ENCODE measurements at regions of chr14 and their contacts with region 1.

Region 1: DNA sequence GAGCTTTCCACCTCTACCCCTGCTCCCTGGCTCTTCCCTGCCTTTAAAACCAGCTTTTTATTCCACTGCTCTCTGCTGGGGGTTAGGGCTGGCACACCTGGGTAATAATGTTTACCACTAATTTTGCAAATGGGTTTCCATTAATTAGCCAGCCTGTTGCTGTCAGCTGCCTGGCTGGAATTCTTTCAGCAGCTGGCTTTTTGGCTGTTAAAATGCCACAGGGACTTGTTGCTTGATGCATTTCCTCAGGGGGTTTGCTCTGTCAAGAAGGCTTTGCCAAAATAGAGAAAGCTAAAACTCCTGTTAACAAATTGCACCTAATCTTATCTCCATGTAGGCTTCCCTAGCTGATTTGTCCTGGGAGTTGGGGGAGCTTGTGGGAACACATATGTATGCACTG is 51.8 kb upstream of the PSMC1 start:
- DNase-seq: no peak
- ATAC-seq: no peak
- H3K4me3 ChIP-seq: no peak overlapping the region
- H3K27ac ChIP-seq: no peak overlapping the region
- H3K4me1 ChIP-seq: no peaks in the 10 kb centered on the region
- H3K27me3 ChIP-seq: no peaks in the 10 kb centered on the region
- CTCF ChIP-seq: no peak
- POLR2A ChIP-seq: no peak

Region 2: DNA sequence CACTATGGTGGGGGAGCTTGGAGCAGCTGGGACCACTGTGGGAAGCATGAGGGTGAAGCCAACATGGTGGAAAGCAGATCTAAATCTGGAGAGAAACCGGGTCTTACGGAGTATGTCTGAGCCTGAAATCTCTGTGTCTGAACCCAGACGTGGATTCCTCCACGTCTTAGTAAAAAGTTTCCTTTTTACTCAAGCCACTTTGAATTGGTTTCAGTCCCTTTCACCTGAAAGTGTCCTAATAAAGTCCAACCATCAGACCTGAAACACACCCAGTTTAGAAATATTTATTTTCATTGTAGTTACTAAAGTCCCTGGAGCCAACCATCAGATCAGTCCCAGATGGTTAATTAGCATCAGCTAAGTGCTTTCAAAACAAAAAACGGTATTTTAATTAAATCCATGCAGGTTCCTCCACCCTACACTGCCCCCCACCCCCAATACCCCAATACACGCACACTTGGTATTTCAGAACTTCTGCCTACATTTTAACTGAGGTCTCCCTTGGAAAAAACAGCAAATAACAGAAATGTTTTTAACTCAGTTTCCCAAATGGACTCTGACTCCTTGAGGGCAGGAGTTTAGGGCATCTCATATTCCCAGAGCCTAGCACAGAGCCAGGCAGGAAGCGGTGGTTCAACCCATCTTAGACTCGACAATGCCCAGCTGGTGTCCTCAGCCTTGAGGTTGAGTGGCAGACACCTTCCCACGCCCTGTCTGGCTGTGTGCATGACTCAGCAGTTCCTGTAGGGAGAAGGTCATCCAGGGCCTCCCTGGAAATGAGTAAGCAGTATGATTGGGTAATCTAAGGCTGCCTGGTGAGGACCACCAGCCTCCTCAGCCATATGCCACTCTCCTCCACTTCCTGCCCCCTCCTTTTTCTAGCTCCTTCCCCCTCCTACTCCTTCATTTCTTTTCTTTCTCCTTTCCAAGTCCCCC is 1204.2 kb before region 1 on chr14:
- in situ Hi-C with region 1: loop called in 1 of 4 experiments (anchors 25 kb)
- intact Hi-C with region 1: no loop called
- DNase-seq: no peak
- ATAC-seq: no peak
- H3K4me3 ChIP-seq: no peak overlapping the region
- H3K27ac ChIP-seq: no peak overlapping the region
- H3K4me1 ChIP-seq: no peaks in the 10 kb centered on the region
- H3K27me3 ChIP-seq: peaks cover 0 to 9% (median 0%) of the 10 kb centered on the region in 3 donors
- CTCF ChIP-seq: no peak
- POLR2A ChIP-seq: no peak

Region 3: DNA sequence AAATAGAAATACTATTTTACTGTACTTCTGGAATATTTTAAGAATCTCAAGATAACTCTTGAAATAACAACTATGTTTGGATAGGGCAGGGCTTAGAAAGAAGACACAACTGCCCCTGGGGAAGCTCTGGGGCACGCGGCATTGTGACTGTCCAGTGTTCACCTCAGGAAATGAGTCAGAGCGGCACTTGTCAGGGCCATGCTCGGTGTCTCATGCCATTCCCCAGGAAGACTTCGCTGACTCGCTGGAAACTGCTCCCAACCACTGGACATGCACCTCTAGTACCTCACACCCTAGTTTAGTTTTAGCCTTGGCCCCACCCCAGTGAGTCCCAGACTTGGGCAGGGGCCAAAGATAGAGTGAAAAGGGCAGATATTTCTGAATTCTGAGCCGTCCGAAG is 419.7 kb after region 1 on chr14:
- in situ Hi-C with region 1: no loop called
- intact Hi-C with region 1: no loop called
- DNase-seq: peak; percentile 94 to 97
- ATAC-seq: peak; percentile 58 to 64
- H3K4me3 ChIP-seq: peak overlapping the region in 2 of 4 donors; percentile 9 to 28
- H3K27ac ChIP-seq: peak overlapping the region; percentile 89 to 96 (median 94)
- H3K4me1 ChIP-seq: peaks cover 51 to 68% of the 10 kb centered on the region in 2 donors
- H3K27me3 ChIP-seq: no peaks in the 10 kb centered on the region
- CTCF ChIP-seq: no peak
- POLR2A ChIP-seq: peak; percentile 47 to 48